ENCODE measurements at regions of chr10 and their contacts with region 1.

Region 1: GRCh38 chr10:124688889-124689670 is 55.1 kb downstream of the FAM53B start:
- DNase-seq: peak in 4 of 5 donors; percentile 43 to 82 (median 62)
- H3K4me3 ChIP-seq: no peak overlapping the region
- H3K4me3 Mint-ChIP-seq: peak overlapping the region; percentile 1 to 87 (median 75)
- H3K27ac ChIP-seq: peak overlapping the region; percentile 48
- H3K27ac Mint-ChIP-seq: peak overlapping the region; percentile 82 to 99 (median 96)
- H3K4me1 ChIP-seq: peaks cover 79% of the 10 kb centered on the region
- H3K4me1 Mint-ChIP-seq: peaks cover 73 to 93% (median 93%) of the 10 kb centered on the region in 3 donors
- H3K27me3 ChIP-seq: no peaks in the 10 kb centered on the region
- H3K27me3 Mint-ChIP-seq: no peaks in the 10 kb centered on the region

Region 2: GRCh38 chr10:124677749-124678556 is 11.1 kb before region 1 on chr10:
- CTCF ChIA-PET with region 1: interaction called, 33 read pairs
- POLR2A ChIA-PET with region 1: interaction called, 8 read pairs
- DNase-seq: no peak
- H3K4me3 ChIP-seq: peak overlapping the region; percentile 11
- H3K4me3 Mint-ChIP-seq: peak overlapping the region; percentile 69 to 88 (median 82)
- H3K27ac ChIP-seq: no peak overlapping the region
- H3K27ac Mint-ChIP-seq: peak overlapping the region; percentile 72 to 96 (median 92)
- H3K4me1 ChIP-seq: peaks cover 96% of the 10 kb centered on the region
- H3K4me1 Mint-ChIP-seq: peaks cover 83 to 97% (median 92%) of the 10 kb centered on the region in 3 donors
- H3K27me3 ChIP-seq: no peaks in the 10 kb centered on the region
- H3K27me3 Mint-ChIP-seq: peaks cover 0 to 2% of the 10 kb centered on the region in 2 donors

Region 3: GRCh38 chr10:124755581-124755980 is 66.5 kb after region 1 on chr10:
- CTCF ChIA-PET with region 1: no interaction called
- POLR2A ChIA-PET with region 1: no interaction called
- DNase-seq: no peak
- H3K4me3 ChIP-seq: no peak overlapping the region
- H3K4me3 Mint-ChIP-seq: no peak overlapping the region
- H3K27ac ChIP-seq: no peak overlapping the region
- H3K27ac Mint-ChIP-seq: no peak overlapping the region
- H3K4me1 ChIP-seq: no peaks in the 10 kb centered on the region
- H3K4me1 Mint-ChIP-seq: peaks cover 0 to 4% (median 1%) of the 10 kb centered on the region in 3 donors
- H3K27me3 ChIP-seq: no peaks in the 10 kb centered on the region
- H3K27me3 Mint-ChIP-seq: no peaks in the 10 kb centered on the region

Measured in CD8-positive, alpha-beta memory T cell (primary cell).